H1 (cell line): ENCODE measurements at regions of chr6 and their contacts with region 1.

Region 1: DNA sequence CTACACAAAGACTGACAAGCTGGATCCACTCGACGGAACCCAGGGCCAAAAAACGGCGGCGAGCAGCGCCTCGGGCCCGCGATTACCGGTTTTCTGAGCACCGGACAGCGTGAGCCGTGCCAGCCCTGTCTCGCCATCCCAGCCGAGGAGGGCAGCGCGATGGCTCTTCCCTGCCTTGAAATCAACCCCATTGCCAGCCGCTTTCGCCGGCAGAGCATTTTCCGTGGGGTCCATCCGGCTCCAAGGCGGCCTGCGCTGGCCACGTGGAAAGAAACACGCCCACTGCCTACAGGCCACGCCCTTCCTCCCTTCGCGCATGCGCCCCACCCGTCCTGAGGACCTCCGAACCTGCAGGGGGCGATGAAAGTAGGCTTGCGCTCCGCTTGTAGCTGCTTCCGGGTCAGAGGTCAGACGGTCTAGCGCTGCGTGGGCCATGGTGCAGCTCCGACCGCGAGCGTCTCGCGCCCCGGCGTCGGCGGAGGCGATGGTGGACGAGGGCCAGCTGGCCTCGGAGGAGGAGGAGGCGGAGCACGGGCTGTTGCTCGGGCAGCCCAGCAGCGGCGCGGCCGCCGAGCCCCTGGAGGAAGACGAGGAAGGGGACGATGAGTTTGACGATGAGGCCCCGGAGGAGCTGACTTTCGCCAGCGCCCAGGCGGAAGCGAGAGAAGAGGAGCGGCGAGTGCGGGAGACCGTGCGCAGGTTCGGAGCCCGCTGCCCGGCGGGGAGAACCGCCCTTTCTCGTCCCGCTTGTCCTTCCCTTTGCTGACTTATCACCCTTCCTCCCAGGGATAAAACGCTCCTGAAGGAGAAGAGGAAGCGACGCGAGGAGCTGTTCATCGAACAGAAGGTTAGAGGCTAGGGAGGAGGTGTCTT is at the start of gene NOL7:
- DNase-seq: peak; percentile 95 to 99
- H3K4me3 ChIP-seq: peak within 1 kb of the TSS; percentile 58 to 99 (median 91)
- H3K27ac ChIP-seq: peak within 1 kb of the TSS; percentile 87
- H3K4me1 ChIP-seq: peaks cover 0 to 2% (median under 1%) of the 10 kb centered on the region in 4 experiments; a peak in 3 of 7 replicates
- H3K27me3 ChIP-seq: no peaks in the 10 kb centered on the region
- CTCF ChIP-seq: peak; percentile 80 to 99 (median 95)
- EP300 ChIP-seq: no peak
- POLR2A ChIP-seq: peak in 1 of 2 experiments; percentile 94; a peak in 2 of 3 replicates
- RAD21 ChIP-seq: peak in 1 of 2 experiments; percentile 1; a peak in 2 of 4 replicates
- total RNA-seq, gene NOL7: 67.8 and 70.4 TPM in 2 replicates

Region 2: DNA sequence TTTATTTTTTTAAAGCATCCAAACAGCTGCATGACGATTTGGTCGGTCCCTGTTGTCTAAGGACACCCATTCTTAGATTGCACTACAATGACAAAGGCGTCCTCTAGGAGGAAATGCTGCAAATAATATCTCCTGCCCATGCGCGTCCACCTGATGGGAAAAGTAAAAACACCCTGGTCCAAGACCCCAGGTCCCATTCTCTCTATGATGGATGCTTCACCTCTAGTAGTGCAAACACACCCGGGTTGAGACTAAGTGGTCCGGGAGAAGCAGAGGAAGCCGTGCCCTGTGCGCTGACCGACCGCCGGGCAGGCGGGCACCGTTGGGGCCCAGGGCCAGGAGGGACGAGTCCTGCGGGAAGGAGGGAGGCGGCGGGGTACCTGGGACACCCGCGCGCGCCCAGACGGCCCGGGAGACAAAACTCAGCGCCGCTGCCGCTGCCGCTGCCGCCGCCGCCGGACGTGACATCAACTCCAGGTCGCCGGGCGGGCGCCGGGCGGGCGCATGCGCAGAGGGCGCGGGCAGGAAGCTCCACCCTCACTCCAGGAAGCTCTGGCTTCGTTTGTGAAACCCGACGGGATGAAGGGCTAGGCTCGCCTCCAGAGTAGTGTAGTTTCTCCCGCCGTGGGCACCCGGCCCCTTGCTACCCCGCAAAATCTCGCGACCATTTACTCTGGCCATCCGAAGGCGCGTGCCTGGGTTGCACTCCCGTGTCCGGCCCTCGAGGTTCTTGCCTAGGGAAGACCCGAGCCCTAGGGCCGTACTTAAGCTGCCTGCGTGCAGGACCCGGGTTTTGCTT is 286.9 kb before region 1 on chr6 and contains the start of gene TBC1D7:
- CTCF ChIA-PET with region 1: interaction called, 6 read pairs
- POLR2A ChIA-PET with region 1: interaction called, 22 read pairs
- DNase-seq: peak; percentile 79 to 97
- H3K4me3 ChIP-seq: peak within 1 kb of the TSS; percentile 73 to 92 (median 90)
- H3K27ac ChIP-seq: peak within 1 kb of the TSS; percentile 82
- H3K4me1 ChIP-seq: no peaks in the 10 kb centered on the region; a peak in 1 of 7 replicates
- H3K27me3 ChIP-seq: no peaks in the 10 kb centered on the region
- CTCF ChIP-seq: no peak
- EP300 ChIP-seq: no peak
- POLR2A ChIP-seq: peak; percentile 65 to 93
- RAD21 ChIP-seq: no peak
- total RNA-seq, gene TBC1D7: 55.2 and 59.9 TPM in 2 replicates

Region 3: GRCh38 chr6:13487122-13488014 is 127.8 kb before region 1 on chr6 and contains the start of gene GFOD1:
- CTCF ChIA-PET with region 1: interaction called, 3 read pairs
- POLR2A ChIA-PET with region 1: interaction called, 10 read pairs
- DNase-seq: peak; percentile 39 to 89
- H3K4me3 ChIP-seq: peak within 1 kb of the TSS; percentile 57 to 87 (median 75)
- H3K27ac ChIP-seq: no peak within 1 kb of the TSS
- H3K4me1 ChIP-seq: peaks cover 0 to 8% (median 3%) of the 10 kb centered on the region in 4 experiments; a peak in 5 of 7 replicates
- H3K27me3 ChIP-seq: peaks cover 7 to 53% (median 32%) of the 10 kb centered on the region in 4 experiments
- CTCF ChIP-seq: no peak
- EP300 ChIP-seq: no peak
- POLR2A ChIP-seq: peak in 1 of 2 experiments; percentile 40; a peak in 2 of 3 replicates
- RAD21 ChIP-seq: peak; percentile 2 to 15; a peak in 2 of 4 replicates
- total RNA-seq, gene GFOD1: 8.5 and 8.8 TPM in 2 replicates

Region 4: GRCh38 chr6:13593720-13594119 is 21.4 kb before region 1 on chr6:
- CTCF ChIA-PET with region 1: interaction called, 6 read pairs
- POLR2A ChIA-PET with region 1: interaction called, 14 read pairs
- DNase-seq: no peak
- H3K4me3 ChIP-seq: no peak overlapping the region
- H3K27ac ChIP-seq: no peak overlapping the region
- H3K4me1 ChIP-seq: no peaks in the 10 kb centered on the region; a peak in 2 of 7 replicates
- H3K27me3 ChIP-seq: no peaks in the 10 kb centered on the region
- CTCF ChIP-seq: no peak
- EP300 ChIP-seq: no peak
- POLR2A ChIP-seq: no peak
- RAD21 ChIP-seq: no peak

Region 5: GRCh38 chr6:13684855-13685254 is 69.7 kb after region 1 on chr6:
- CTCF ChIA-PET with region 1: no interaction called
- POLR2A ChIA-PET with region 1: no interaction called
- DNase-seq: no peak
- H3K4me3 ChIP-seq: no peak overlapping the region
- H3K27ac ChIP-seq: no peak overlapping the region
- H3K4me1 ChIP-seq: no peaks in the 10 kb centered on the region
- H3K27me3 ChIP-seq: no peaks in the 10 kb centered on the region
- CTCF ChIP-seq: no peak
- EP300 ChIP-seq: no peak
- POLR2A ChIP-seq: no peak
- RAD21 ChIP-seq: no peak

Region 6: DNA sequence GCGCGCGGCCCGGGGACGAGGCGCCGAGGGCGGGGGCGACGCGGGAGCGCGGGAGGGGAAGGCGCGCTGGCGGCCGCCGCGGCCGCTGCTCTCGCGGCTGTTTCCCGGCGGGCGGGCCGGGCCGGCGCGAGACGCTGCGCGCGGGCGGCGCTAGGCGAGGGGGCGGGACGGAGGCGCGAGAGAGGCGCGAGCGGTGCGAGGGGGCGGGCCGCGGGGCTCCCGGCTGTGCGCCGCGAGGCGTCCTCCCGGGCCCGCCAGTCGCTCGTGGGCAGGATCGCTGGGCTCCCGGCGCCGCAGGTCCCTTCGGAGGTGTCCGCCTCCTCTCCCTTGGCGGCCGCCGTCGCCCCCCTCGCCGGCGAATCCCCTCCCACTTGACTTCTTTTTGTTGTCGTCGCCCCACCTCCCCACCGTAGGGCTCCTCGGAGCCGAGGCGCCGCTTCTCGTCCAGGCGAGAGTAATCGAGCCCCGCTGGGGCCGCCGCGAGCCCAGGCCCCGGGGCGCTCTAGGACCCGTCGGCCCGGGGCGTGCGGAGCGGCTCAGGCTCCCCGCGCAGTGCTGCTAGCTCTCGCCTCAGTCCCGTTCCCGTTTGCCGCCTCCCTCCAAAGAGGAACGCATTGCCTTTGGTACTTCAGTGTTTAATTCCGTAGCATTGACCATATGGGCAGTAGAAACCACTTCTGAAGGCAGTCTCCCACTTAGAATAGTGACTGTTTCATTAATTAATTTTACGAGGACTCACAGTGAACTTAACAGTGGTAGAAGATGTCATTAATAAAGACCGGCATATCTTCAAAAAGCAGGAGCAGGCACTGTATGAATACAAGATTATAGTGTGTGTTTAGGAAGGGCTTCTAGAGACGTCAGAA is 96.8 kb after region 1 on chr6 and contains the start of gene RANBP9:
- CTCF ChIA-PET with region 1: no interaction called
- POLR2A ChIA-PET with region 1: interaction called, 10 read pairs
- DNase-seq: peak; percentile 71 to 87
- H3K4me3 ChIP-seq: peak within 1 kb of the TSS; percentile 74 to 96 (median 82)
- H3K27ac ChIP-seq: peak within 1 kb of the TSS; percentile 93
- H3K4me1 ChIP-seq: no peaks in the 10 kb centered on the region
- H3K27me3 ChIP-seq: no peaks in the 10 kb centered on the region
- CTCF ChIP-seq: no peak
- EP300 ChIP-seq: no peak
- POLR2A ChIP-seq: peak; percentile 77 to 91
- RAD21 ChIP-seq: peak in 1 of 2 experiments; percentile 37; a peak in 1 of 4 replicates
- total RNA-seq, gene RANBP9: 34.3 and 36.7 TPM in 2 replicates